ENCODE measurements at regions of chr11 and their contacts with region 1.

Region 1: DNA sequence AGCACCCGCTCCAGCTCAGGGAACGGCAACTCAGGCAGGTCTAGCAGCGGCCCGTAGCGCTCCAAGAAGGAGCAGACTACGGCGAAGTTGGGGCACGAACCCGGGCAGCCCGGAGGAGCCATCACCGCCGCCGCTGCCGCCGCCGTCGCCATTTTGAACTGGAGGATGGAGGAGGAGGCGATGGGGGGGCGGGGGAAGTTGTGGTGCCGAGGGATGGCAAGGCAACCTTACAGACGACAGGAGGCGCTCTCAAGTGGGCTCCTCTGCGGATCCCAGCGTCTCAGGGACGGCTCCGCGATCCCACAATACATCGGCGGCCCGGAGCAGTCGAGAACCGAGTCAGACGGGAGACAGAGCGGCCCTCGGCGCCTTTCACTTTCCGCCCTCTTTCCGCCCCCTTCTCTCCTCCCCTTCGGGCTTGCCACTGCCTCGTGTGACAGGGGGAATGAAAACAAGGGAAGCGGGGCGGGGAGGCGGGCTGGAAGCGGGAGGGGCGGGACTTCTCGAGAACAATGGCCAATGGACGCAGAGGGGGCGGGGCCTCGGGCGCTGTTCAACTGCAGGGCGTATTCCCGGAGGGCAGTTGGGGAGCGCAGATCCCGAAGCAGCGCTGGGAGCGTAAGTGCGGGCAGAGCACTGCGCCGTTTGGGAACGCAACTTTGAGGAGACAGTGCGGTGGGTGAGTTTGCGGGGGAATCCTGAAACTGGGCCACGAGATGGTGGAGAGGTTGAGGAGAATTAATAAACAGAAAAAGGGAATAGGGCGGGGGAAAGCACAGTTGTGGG is at the starts of genes AAMDC and RSF1:
- DNase-seq: peak; percentile 99
- ATAC-seq: peak; percentile 89 to 94 (median 94)
- H3K4me3 ChIP-seq: peak within 1 kb of the TSS; percentile 97
- H3K27ac ChIP-seq: peak within 1 kb of the TSS; percentile 96
- H3K4me1 ChIP-seq: peaks cover 36% of the 10 kb centered on the region
- H3K27me3 ChIP-seq: no peaks in the 10 kb centered on the region
- CTCF ChIP-seq: peak; percentile 58
- total RNA-seq, gene AAMDC: 54.5 to 70.1 (median 61.3) TPM
- total RNA-seq, gene RSF1: 30.0 to 34.8 (median 32.4) TPM

Region 2: GRCh38 chr11:77865805-77866204 is 45.0 kb after region 1 on chr11:
- intact Hi-C with region 1: loop called in 1 of 2 experiments (anchors 5 kb)
- DNase-seq: no peak
- ATAC-seq: no peak
- H3K4me3 ChIP-seq: no peak overlapping the region
- H3K27ac ChIP-seq: no peak overlapping the region
- H3K4me1 ChIP-seq: peaks cover 8% of the 10 kb centered on the region
- H3K27me3 ChIP-seq: no peaks in the 10 kb centered on the region
- CTCF ChIP-seq: no peak

Region 3: GRCh38 chr11:77994412-77995362 is 173.9 kb after region 1 on chr11 and contains the start of gene INTS4:
- intact Hi-C with region 1: loop called in 1 of 2 experiments (anchors 5 kb)
- DNase-seq: peak; percentile 99 to 100
- ATAC-seq: peak; percentile 99
- H3K4me3 ChIP-seq: peak within 1 kb of the TSS; percentile 88
- H3K27ac ChIP-seq: peak within 1 kb of the TSS; percentile 88
- H3K4me1 ChIP-seq: peaks cover 13% of the 10 kb centered on the region
- H3K27me3 ChIP-seq: no peaks in the 10 kb centered on the region
- CTCF ChIP-seq: no peak
- total RNA-seq, gene INTS4: 12.1 to 18.6 (median 14.6) TPM